Right ventricle myocardium inferior (tissue), 1 donor: ENCODE measurements at regions of chr1 and their contacts with region 1.

Region 1: GRCh38 chr1:20696397-20697329 is 21.1 kb downstream of the KIF17 start:
- DNase-seq: peak; percentile 91
- ATAC-seq: peak; percentile 94

Region 2: DNA sequence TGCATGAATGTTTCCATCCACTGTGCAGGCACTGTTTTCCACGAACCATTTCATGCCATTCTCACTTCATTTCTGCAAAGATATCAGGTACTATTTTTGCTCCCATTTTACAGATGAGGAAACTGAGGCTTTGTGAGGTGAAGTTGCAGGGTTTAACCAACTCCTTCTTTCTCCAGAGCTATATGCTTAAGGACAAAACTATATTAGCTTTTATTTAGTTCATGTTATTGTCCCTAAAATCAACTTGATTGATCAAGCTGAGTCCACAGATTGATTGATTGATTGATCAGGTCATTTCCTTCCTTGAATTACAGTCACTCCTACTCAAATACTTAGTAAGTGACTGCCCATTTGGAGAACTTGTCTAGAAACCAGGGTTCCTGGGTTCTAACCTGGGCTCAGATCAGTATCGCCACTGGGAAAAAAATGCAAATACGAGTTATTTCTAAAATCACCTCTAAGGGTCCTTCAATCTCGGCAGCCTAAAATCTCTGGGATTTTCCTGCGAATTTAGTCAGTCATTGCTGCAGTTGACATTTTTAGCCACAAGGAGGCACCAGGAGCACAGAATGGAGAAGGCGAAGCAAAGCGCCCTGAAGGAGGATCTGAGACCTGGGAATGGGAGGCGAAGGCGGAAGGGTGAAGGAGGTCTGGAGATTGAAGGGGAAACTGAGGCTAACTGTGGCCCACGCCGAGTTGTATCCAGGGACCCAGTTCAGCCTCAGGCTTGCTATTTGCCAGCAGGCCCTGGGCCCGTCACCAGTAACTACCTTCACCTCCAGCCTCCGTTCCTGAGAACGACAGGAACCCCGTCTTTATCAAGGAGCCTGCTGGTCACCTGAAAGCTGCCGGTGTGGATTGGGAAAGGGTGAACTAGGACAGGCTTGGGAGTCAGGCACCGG is 174.5 kb before region 1 on chr1:
- intact Hi-C with region 1: no loop called
- DNase-seq: peak; percentile 63
- ATAC-seq: peak; percentile 69

Region 3: GRCh38 chr1:20732588-20733360 is 36.1 kb after region 1 on chr1 and contains the start of gene SH2D5:
- intact Hi-C with region 1: loop called (anchors 2 kb)
- DNase-seq: no peak
- ATAC-seq: peak; percentile 54
- total RNA-seq, gene SH2D5: not detected

Region 4: GRCh38 chr1:21200767-21201166 is 504.1 kb after region 1 on chr1:
- intact Hi-C with region 1: loop called (anchors 1 kb)
- DNase-seq: no peak
- ATAC-seq: no peak